AG04449 (cell line): ENCODE measurements at regions of chr9 and their contacts with region 1.

Region 1: GRCh38 chr9:33225319-33226149 is 14.4 kb upstream of the SPINK4 start:
- DNase-seq: peak; percentile 46
- H3K4me3 ChIP-seq: no peak overlapping the region
- CTCF ChIP-seq: peak; percentile 41

Region 2: DNA sequence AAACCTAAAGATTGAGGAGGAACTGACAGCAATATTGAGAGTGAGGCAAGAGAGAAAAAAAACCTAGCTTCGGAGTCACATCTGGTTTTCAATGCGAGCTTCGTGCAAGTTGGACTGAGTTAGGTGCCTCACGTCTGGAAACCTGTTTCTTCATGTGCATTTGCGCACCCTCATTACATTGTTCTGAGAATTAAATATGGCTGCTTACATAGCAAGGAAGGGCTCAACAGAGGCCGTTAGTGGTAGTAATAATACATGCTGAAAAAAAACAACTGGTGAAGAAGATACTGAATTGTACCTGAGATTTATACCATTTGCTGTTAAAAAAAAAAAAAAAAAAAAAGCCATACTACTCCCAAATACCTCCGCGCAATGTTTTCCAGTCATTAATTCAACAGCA is 181.9 kb before region 1 on chr9:
- CTCF ChIA-PET with region 1: no interaction called
- POLR2A ChIA-PET with region 1: no interaction called
- DNase-seq: no peak
- H3K4me3 ChIP-seq: peak overlapping the region; percentile 67
- CTCF ChIP-seq: no peak

Region 3: DNA sequence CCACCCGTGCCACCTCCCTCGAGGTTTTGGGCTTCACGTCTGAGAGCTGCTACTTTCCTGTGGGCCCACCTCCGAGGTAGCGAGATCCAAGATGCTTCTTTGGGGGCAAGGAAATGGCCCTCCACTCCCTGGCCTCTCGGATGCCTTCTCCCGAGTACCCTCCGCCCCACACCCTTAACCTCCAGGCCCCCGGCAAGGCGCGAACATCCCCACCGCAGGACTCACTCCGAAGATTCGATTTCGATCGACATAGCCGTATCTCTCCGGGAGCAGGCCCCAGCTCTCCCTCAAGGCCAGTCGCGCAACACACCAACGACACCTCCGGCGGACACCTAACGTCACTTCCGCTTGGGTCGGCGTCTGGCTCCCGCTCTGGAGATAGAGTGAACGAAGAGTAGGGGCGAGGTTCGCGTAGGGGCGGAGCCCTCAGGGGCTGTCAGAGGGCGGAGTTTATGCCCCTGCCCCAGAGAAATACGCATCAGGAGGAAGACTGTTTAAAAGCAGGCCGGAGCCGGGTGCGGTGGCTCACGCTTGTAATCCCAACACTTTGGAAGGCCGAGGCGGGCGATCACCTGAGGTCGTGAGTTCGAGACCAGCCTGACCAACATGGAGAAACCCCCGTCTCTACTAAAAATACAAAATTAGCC is 149.1 kb before region 1 on chr9 and contains the start of gene SMU1:
- CTCF ChIA-PET with region 1: interaction called, 149 read pairs
- POLR2A ChIA-PET with region 1: interaction called, 5 read pairs
- DNase-seq: peak; percentile 69
- H3K4me3 ChIP-seq: peak within 1 kb of the TSS; percentile 98
- CTCF ChIP-seq: no peak

Region 4: DNA sequence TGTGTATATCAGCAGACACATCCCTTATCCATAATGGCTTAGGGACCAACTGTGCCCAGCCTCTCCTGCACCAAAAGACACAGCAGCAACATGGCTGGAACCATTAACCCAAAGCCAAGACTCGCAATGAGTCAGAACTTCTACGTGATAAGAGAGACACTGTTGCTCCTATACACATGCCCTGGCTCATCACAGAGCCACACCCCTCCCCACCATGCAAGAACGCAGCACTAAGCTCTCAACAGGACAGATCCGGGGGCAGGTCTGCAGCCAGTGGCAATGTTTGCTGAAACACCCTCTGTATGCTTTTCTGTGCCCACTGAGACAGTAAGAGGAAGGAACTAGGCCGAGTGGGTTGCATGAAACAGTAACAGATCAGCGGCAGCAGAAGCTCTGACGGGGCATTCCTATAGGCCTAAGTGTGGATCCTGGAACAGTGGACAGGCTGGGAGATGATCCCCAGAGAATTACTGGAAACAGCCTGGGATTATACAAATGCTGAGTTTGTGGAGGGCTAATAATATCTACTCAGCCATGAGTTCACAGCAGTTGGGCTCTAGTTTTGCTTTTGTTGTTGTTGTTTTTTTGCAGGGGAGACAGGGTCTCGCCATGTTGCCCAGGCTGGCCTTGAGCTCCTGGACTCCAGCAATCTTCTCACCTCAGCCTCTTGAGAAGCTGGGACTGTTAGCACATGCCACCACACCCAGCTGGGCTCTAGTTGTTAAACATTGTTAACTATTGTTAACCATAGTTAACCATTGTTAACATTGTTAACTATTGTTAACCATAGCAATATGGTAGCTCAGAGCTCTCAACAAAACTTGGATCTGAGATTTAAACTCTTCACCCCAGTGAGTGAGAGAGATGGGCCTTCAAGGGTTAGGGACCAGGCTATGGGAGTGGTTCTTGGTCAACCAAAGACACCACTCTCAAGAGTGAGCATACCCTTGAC is 99.4 kb before region 1 on chr9:
- CTCF ChIA-PET with region 1: interaction called, 10 read pairs
- POLR2A ChIA-PET with region 1: no interaction called
- DNase-seq: no peak
- H3K4me3 ChIP-seq: no peak overlapping the region
- CTCF ChIP-seq: no peak

Region 5: GRCh38 chr9:33202018-33202417 is 23.5 kb before region 1 on chr9:
- CTCF ChIA-PET with region 1: interaction called, 14 read pairs
- POLR2A ChIA-PET with region 1: no interaction called
- DNase-seq: no peak
- H3K4me3 ChIP-seq: no peak overlapping the region
- CTCF ChIP-seq: no peak

Region 6: GRCh38 chr9:33211695-33212393 is 13.7 kb before region 1 on chr9:
- CTCF ChIA-PET with region 1: interaction called, 12 read pairs
- POLR2A ChIA-PET with region 1: no interaction called
- DNase-seq: no peak
- H3K4me3 ChIP-seq: no peak overlapping the region
- CTCF ChIP-seq: no peak

Region 7: GRCh38 chr9:33239921-33240320 is 14.4 kb after region 1 on chr9 and contains the start of gene SPINK4:
- CTCF ChIA-PET with region 1: interaction called, 47 read pairs
- POLR2A ChIA-PET with region 1: no interaction called
- DNase-seq: no peak
- H3K4me3 ChIP-seq: no peak within 1 kb of the TSS
- CTCF ChIP-seq: no peak

Region 8: GRCh38 chr9:33264473-33265177 is 39.1 kb after region 1 on chr9 and contains the starts of genes BAG1 and CHMP5:
- CTCF ChIA-PET with region 1: interaction called, 12 read pairs
- POLR2A ChIA-PET with region 1: no interaction called
- DNase-seq: peak; percentile 96
- H3K4me3 ChIP-seq: peak within 1 kb of the TSS; percentile 99
- CTCF ChIP-seq: peak; percentile 46

Region 9: GRCh38 chr9:33374634-33375213 is 149.2 kb after region 1 on chr9:
- CTCF ChIA-PET with region 1: no interaction called
- POLR2A ChIA-PET with region 1: no interaction called
- DNase-seq: peak; percentile 17
- H3K4me3 ChIP-seq: no peak overlapping the region
- CTCF ChIP-seq: peak; percentile 80